H1 (cell line): ENCODE measurements at regions of chr6 and their contacts with region 1.

Region 1: DNA sequence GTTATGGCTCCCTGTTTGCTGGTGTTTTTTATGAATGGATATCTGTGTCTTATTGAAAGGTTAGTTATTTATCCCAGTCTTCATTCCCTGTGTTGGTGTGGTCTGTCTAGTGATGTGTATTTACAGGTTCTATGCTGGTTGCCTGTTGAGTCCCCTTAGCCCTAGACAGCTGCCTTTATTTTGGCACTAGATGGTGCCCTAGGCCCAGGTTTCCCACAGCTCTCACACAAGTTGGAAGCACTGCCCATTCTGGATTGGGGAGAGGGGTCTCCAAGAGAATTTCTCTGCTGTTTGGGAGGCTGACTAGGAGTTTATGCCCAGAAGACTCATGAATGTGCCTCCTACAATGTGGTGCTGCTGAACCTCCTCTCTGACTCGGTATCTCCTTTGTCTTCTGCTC is 12.4 kb downstream of the GRM1 start:
- DNase-seq: peak; percentile 39 to 52
- H3K4me3 ChIP-seq: no peak overlapping the region
- H3K27ac ChIP-seq: no peak overlapping the region
- H3K4me1 ChIP-seq: no peaks in the 10 kb centered on the region
- H3K27me3 ChIP-seq: no peaks in the 10 kb centered on the region
- CTCF ChIP-seq: peak; percentile 55 to 85 (median 79)
- EP300 ChIP-seq: no peak
- POLR2A ChIP-seq: no peak
- RAD21 ChIP-seq: peak; percentile 98

Region 2: DNA sequence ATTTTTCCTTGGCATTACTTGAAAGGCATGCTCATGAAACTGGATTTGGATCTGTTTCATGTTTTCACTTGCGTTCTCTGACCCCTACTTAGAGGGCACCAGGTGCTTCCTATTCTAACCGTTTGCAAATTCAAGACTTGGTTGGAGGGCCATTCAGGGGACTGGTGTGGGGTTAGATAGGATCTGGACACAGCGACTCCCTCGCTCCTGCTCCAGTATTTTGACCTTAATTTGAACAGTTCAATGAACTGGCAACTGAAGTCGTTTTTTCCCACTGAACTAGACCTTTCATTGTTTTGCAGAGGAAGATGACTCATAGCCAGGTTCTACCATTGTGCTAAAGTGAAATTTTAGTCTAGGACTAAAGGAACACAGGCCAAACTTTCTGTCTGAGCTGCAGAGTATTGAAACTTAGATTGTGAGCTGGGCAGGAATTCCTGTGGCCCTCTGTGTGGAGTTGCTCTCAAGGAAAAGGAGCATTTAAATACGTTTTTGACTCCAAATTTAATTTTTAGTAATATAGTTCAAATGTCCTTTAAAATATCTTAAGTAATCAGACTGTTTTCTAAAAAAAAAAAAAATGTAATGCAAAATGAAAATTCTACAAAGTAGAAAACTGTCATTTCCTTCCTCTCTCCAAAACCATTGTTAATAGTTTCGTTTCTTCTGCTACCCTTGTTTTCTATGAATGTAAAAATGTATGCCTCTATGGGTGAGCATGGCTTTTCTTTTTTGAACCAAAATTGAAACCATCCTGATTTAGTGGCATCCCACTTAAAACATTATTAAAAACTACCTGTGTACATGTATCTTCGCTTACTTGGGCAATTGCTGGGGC is 1691.4 kb before region 1 on chr6:
- CTCF ChIA-PET with region 1: no interaction called
- POLR2A ChIA-PET with region 1: no interaction called
- DNase-seq: no peak
- H3K4me3 ChIP-seq: no peak overlapping the region
- H3K27ac ChIP-seq: no peak overlapping the region
- H3K4me1 ChIP-seq: peaks cover 0 to 13% (median 7%) of the 10 kb centered on the region in 4 experiments; a peak in 6 of 7 replicates
- H3K27me3 ChIP-seq: no peaks in the 10 kb centered on the region
- CTCF ChIP-seq: no peak
- EP300 ChIP-seq: no peak
- POLR2A ChIP-seq: no peak
- RAD21 ChIP-seq: no peak

Region 3: GRCh38 chr6:146028293-146028691 is 13.0 kb before region 1 on chr6:
- CTCF ChIA-PET with region 1: interaction called, 11 read pairs
- POLR2A ChIA-PET with region 1: no interaction called
- DNase-seq: peak in 1 of 2 experiments; percentile 93
- H3K4me3 ChIP-seq: peak overlapping the region; percentile 59 to 69 (median 65); a peak in 7 of 8 replicates
- H3K27ac ChIP-seq: no peak overlapping the region
- H3K4me1 ChIP-seq: peaks cover 0 to 2% (median 0%) of the 10 kb centered on the region in 4 experiments; a peak in 3 of 7 replicates
- H3K27me3 ChIP-seq: peaks cover 0 to 5% (median 2%) of the 10 kb centered on the region in 4 experiments; a peak in 3 of 7 replicates
- CTCF ChIP-seq: peak in 1 of 3 experiments; percentile 0; a peak in 1 of 4 replicates
- EP300 ChIP-seq: no peak
- POLR2A ChIP-seq: no peak
- RAD21 ChIP-seq: no peak

Region 4: DNA sequence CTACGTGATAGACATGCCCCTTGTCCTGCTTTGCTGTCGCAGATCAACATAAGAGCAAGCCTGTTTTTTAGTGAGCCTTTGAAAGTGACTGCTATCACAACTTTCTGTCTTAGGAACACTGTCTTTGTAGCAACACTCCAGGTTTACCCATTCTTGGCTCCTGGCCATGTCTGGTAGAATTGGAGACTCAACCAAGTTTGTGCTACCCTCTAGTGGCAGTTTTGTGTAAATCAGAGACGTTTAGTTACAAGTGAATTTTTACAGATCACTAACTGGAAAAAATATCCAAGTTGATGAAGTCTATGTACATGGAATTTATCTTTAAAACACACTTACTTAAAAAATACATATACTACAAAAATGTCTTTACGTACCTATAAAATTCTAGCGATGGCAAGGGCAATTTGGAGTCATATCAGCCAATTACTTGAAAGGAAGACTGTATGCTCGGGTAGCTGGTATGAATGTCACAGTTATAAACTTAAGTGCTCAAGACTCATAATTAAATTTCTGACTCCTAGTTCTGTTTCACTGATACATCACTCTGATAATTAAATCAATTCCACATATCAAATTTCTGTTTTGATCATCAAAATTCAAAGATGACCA is 658.9 kb after region 1 on chr6:
- CTCF ChIA-PET with region 1: interaction called, 23 read pairs
- POLR2A ChIA-PET with region 1: no interaction called
- DNase-seq: peak in 1 of 2 experiments; percentile 15
- H3K4me3 ChIP-seq: no peak overlapping the region
- H3K27ac ChIP-seq: no peak overlapping the region
- H3K4me1 ChIP-seq: peaks cover 0 to 3% (median 0%) of the 10 kb centered on the region in 4 experiments; a peak in 1 of 7 replicates
- H3K27me3 ChIP-seq: no peaks in the 10 kb centered on the region
- CTCF ChIP-seq: peak in 2 of 3 experiments; percentile 65 to 70; a peak in 3 of 4 replicates
- EP300 ChIP-seq: no peak
- POLR2A ChIP-seq: no peak
- RAD21 ChIP-seq: peak; percentile 92 to 94